H1 (cell line): ENCODE measurements at regions of chr11 and their contacts with region 1.

Region 1: DNA sequence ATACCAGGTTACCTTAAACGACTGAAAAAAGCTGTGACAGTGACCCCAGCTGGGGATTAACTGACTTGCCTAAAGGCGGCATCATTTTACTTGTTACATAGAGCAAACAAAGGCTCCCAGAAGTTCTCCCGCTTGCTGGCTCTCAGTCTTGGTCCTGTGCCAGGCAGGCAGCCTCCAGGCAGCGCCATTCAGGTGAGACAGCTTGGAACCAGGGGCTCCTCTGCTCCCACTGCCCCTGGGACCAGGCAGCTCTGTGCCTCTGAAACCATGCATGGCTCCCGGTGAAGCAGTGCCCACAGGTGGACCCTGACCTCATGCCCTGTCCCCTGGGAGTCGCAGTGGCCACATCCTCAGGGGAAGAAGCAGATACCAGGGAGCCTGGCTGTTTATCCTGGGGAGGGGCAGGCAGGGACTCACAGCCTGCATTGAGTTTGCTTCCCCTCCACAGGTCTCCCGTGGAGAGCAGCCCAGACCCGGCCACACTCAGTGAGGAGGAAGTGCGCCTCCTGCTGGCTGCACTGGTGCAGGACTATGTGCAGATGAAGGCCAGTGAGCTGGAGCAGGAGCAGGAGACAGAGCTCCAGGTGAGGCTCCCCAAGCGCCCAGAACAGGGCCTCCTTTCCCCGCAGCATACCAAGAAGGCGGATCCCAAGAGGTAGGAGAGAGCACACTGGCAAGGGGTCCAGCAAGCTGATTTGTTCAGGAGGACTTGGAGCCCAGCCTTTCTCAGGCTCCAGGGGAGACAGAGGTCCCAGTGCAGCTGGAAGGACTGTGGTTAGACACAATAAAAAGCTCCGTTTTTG is 15.6 kb upstream of the CYP2R1 start:
- DNase-seq: peak in 1 of 2 experiments; percentile 94
- H3K4me3 ChIP-seq: no peak overlapping the region
- H3K27ac ChIP-seq: no peak overlapping the region
- H3K4me1 ChIP-seq: peaks cover 0 to 11% (median under 1%) of the 10 kb centered on the region in 4 experiments; a peak in 4 of 7 replicates
- H3K27me3 ChIP-seq: peaks cover 0 to 7% (median 0%) of the 10 kb centered on the region in 4 experiments; a peak in 3 of 7 replicates
- CTCF ChIP-seq: peak; percentile 78 to 86 (median 80)
- EP300 ChIP-seq: no peak
- POLR2A ChIP-seq: no peak
- RAD21 ChIP-seq: peak; percentile 57 to 60

Region 2: GRCh38 chr11:14619603-14620531 is 287.7 kb before region 1 on chr11:
- CTCF ChIA-PET with region 1: interaction called, 138 read pairs
- POLR2A ChIA-PET with region 1: no interaction called
- DNase-seq: no peak
- H3K4me3 ChIP-seq: no peak overlapping the region
- H3K27ac ChIP-seq: no peak overlapping the region
- H3K4me1 ChIP-seq: no peaks in the 10 kb centered on the region
- H3K27me3 ChIP-seq: peaks cover 0 to 1% (median 0%) of the 10 kb centered on the region in 4 experiments; a peak in 1 of 7 replicates
- CTCF ChIP-seq: no peak
- EP300 ChIP-seq: no peak
- POLR2A ChIP-seq: no peak
- RAD21 ChIP-seq: no peak

Region 3: DNA sequence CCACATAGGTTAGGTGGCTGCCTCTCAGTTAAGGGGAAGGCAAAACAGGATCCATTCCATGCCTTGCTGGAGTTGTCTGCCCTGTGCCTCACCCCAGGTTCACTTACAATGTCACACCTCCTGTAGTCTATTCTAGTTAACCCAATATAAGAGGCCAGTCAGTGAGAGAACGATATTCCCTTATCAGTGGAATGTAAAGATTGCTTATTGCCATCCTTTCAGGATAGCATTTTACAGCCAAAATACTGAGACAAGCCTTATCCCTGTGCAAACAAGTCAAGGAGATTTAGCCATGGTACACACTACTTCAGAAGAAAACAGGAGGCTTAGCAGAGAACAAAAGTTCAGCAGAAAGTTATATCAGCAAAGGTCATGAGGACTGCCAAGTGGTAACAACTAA is 21.1 kb before region 1 on chr11:
- CTCF ChIA-PET with region 1: interaction called, 54 read pairs
- POLR2A ChIA-PET with region 1: no interaction called
- DNase-seq: no peak
- H3K4me3 ChIP-seq: no peak overlapping the region
- H3K27ac ChIP-seq: no peak overlapping the region
- H3K4me1 ChIP-seq: no peaks in the 10 kb centered on the region
- H3K27me3 ChIP-seq: peaks cover 0 to 4% (median 3%) of the 10 kb centered on the region in 4 experiments; a peak in 2 of 7 replicates
- CTCF ChIP-seq: no peak
- EP300 ChIP-seq: no peak
- POLR2A ChIP-seq: no peak
- RAD21 ChIP-seq: no peak

Region 4: GRCh38 chr11:14954581-14954980 is 47.0 kb after region 1 on chr11:
- CTCF ChIA-PET with region 1: interaction called, 19 read pairs
- POLR2A ChIA-PET with region 1: no interaction called
- DNase-seq: no peak
- H3K4me3 ChIP-seq: no peak overlapping the region
- H3K27ac ChIP-seq: no peak overlapping the region
- H3K4me1 ChIP-seq: no peaks in the 10 kb centered on the region
- H3K27me3 ChIP-seq: no peaks in the 10 kb centered on the region; a peak in 2 of 7 replicates
- CTCF ChIP-seq: no peak
- EP300 ChIP-seq: no peak
- POLR2A ChIP-seq: no peak
- RAD21 ChIP-seq: no peak

Region 5: GRCh38 chr11:15074206-15075161 is 166.9 kb after region 1 on chr11:
- CTCF ChIA-PET with region 1: interaction called, 101 read pairs
- POLR2A ChIA-PET with region 1: no interaction called
- DNase-seq: peak; percentile 73 to 98
- H3K4me3 ChIP-seq: peak overlapping the region; percentile 40 to 68 (median 56)
- H3K27ac ChIP-seq: no peak overlapping the region; the same call in 1 of the 2 replicates
- H3K4me1 ChIP-seq: peaks cover 0 to 4% (median under 1%) of the 10 kb centered on the region in 4 experiments; a peak in 2 of 7 replicates
- H3K27me3 ChIP-seq: peaks cover 4 to 24% (median 20%) of the 10 kb centered on the region in 4 experiments
- CTCF ChIP-seq: peak; percentile 78 to 93 (median 90)
- EP300 ChIP-seq: no peak
- POLR2A ChIP-seq: no peak
- RAD21 ChIP-seq: peak; percentile 81 to 86

Region 6: DNA sequence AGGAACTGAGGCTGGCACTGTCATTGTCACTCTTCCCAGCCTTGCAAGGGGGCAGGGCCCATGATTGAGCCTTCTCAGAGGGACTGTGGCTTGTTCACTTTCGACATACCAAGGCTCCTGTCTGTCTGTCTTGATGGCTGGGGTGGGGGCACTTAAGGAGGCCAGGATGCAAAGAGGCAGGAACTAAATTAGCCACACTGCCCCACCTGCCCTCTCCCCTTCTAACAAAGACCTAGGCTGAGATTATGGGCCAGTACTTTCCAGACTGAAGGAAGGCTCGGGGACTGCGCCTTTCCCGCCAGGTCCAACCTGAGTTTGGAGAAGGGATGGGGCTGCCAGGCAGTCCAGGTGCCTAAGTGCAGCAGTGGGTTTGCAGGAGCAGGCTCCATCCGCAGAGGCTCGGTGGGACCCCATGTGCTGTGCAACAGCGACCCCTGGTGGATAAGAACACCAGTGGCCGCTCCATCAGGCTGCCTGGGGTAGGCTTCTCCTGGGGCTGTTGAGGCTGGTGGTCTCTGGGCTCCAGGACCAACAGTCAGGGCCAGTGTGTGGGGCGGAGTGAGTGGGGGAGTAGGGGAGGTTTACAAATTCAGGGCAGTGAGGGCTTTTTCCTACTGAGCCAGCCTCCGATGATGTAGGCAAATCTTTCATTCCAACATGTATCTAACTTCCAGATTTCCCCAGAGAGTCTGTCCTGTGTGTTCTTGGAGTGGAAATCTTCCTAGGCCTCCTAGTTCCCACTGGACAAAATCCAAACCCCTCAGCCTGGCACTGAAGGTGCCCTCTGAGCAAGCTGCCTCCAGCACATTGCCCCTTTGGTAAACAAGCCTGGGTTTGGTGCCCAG is 301.0 kb after region 1 on chr11:
- CTCF ChIA-PET with region 1: interaction called, 56 read pairs
- POLR2A ChIA-PET with region 1: no interaction called
- DNase-seq: peak; percentile 59 to 92
- H3K4me3 ChIP-seq: no peak overlapping the region
- H3K27ac ChIP-seq: no peak overlapping the region
- H3K4me1 ChIP-seq: peaks cover 0 to 2% (median 0%) of the 10 kb centered on the region in 4 experiments; a peak in 1 of 7 replicates
- H3K27me3 ChIP-seq: no peaks in the 10 kb centered on the region; a peak in 1 of 7 replicates
- CTCF ChIP-seq: peak; percentile 95 to 97 (median 95)
- EP300 ChIP-seq: no peak
- POLR2A ChIP-seq: no peak
- RAD21 ChIP-seq: peak; percentile 99 to 100

Region 7: GRCh38 chr11:15367695-15368094 is 460.1 kb after region 1 on chr11:
- CTCF ChIA-PET with region 1: no interaction called
- POLR2A ChIA-PET with region 1: no interaction called
- DNase-seq: no peak
- H3K4me3 ChIP-seq: no peak overlapping the region
- H3K27ac ChIP-seq: no peak overlapping the region
- H3K4me1 ChIP-seq: peaks cover 0 to 6% (median 4%) of the 10 kb centered on the region in 4 experiments; a peak in 4 of 7 replicates
- H3K27me3 ChIP-seq: no peaks in the 10 kb centered on the region; a peak in 1 of 7 replicates
- CTCF ChIP-seq: no peak
- EP300 ChIP-seq: no peak
- POLR2A ChIP-seq: no peak
- RAD21 ChIP-seq: no peak